Right ventricle myocardium inferior (tissue), 1 donor: ENCODE measurements at regions of chr3 and their contacts with region 1.

Region 1: GRCh38 chr3:12135029-12135657 is 23.6 kb downstream of the TIMP4 start:
- DNase-seq: peak; percentile 93
- ATAC-seq: peak; percentile 85

Region 2: DNA sequence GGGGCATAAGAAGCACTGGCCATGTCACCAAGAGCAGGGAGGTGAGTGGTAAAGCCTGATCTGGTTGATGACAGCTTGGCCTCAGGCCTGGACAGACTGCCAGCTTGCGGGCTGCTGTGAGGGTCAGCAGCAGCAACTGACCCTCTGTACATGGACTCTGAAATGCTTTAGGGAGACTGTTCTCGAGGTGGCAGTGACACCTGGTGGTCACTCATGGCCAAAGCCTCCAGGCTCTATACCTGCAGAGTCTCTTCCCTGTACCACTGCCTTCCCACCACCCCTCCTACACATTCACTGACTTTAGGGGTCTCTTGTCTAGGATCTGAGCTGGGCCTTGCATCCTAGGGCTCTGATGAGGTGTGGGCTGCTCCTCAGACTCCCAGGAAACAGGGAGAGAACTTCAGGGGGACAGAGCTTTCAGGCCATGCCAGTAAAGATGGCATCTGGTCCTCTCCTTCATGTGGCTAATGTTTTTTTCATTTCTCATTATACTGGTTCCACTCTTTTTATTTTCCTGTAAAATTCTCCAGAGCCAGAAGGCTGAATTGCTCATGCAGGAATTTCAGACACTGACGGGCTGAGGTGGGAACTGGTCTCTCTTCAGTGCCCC is 40.8 kb after region 1 on chr3:
- intact Hi-C with region 1: loop called (anchors 1 kb)
- DNase-seq: peak; percentile 78
- ATAC-seq: peak; percentile 79

Region 3: GRCh38 chr3:12287727-12288191 is 152.6 kb after region 1 on chr3:
- intact Hi-C with region 1: loop called (anchors 5 kb)
- DNase-seq: peak; percentile 81
- ATAC-seq: peak; percentile 93

Region 4: GRCh38 chr3:12484198-12484974 is 349.2 kb after region 1 on chr3 and contains the start of gene TSEN2:
- intact Hi-C with region 1: loop called (anchors 2 kb)
- DNase-seq: peak; percentile 98
- ATAC-seq: peak; percentile 96
- total RNA-seq, gene TSEN2: 24.1 TPM